ENCODE measurements at regions of chr10 and their contacts with region 1.

Region 1: GRCh38 chr10:6929148-6929830 is 349.2 kb upstream of the PRKCQ start:
- DNase-seq: no peak
- H3K4me3 Mint-ChIP-seq: peak overlapping the region; percentile 19
- H3K27ac Mint-ChIP-seq: no peak overlapping the region
- H3K4me1 Mint-ChIP-seq: peaks cover 54% of the 10 kb centered on the region
- H3K27me3 Mint-ChIP-seq: peaks cover 6% of the 10 kb centered on the region

Region 2: GRCh38 chr10:6748978-6749635 is 180.2 kb before region 1 on chr10:
- intact Hi-C with region 1: no loop called
- DNase-seq: no peak
- H3K4me3 Mint-ChIP-seq: no peak overlapping the region
- H3K27ac Mint-ChIP-seq: no peak overlapping the region
- H3K4me1 Mint-ChIP-seq: peaks cover 4% of the 10 kb centered on the region
- H3K27me3 Mint-ChIP-seq: peaks cover 19% of the 10 kb centered on the region

Region 3: DNA sequence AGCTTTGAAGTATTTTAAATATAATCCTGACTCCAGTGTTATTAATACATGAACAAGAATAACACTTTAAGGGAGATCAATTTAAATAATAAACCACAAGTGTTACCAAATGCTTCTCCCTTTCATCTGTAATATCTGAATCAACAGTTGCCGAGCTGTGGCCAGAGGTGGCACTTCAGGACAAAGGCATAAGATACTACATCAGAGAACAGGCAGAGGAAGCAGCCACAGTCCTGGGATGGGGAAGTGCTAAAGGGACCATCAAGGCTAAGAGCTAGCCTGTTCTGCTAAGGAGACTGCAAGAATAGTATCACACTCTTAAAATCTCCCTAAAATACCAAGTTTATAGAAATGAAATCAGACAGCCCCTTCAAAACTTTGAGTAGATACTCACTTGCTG is 29.0 kb after region 1 on chr10:
- intact Hi-C with region 1: loop called (anchors 2 kb)
- DNase-seq: no peak
- H3K4me3 Mint-ChIP-seq: no peak overlapping the region
- H3K27ac Mint-ChIP-seq: peak overlapping the region; percentile 31
- H3K4me1 Mint-ChIP-seq: peaks cover 21% of the 10 kb centered on the region
- H3K27me3 Mint-ChIP-seq: peaks cover 2% of the 10 kb centered on the region

Region 4: GRCh38 chr10:7003831-7004395 is 74.6 kb after region 1 on chr10:
- intact Hi-C with region 1: no loop called
- DNase-seq: no peak
- H3K4me3 Mint-ChIP-seq: no peak overlapping the region
- H3K27ac Mint-ChIP-seq: no peak overlapping the region
- H3K4me1 Mint-ChIP-seq: no peaks in the 10 kb centered on the region
- H3K27me3 Mint-ChIP-seq: peaks cover 10% of the 10 kb centered on the region

Region 5: DNA sequence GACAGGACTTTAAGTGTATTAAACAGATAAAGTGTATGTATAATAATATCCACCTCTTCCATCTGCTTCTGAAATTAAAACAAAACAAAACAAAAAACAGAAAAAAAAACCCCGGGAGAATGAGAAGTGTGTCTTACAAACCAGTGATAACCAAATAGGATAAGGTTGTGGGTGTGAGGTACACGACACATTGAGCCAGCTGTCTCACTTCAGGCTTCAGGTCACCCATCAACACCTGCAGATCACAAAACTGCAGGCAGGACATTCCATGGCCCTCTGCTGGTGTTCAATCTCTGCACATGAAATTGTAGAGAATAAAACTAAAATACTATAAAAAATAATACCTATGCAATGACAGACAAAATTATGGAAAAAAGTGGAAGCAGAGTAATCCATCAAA is 141.7 kb after region 1 on chr10:
- intact Hi-C with region 1: loop called (anchors 2 kb)
- DNase-seq: no peak
- H3K4me3 Mint-ChIP-seq: no peak overlapping the region
- H3K27ac Mint-ChIP-seq: no peak overlapping the region
- H3K4me1 Mint-ChIP-seq: no peaks in the 10 kb centered on the region
- H3K27me3 Mint-ChIP-seq: peaks cover 22% of the 10 kb centered on the region

Measured in activated T-helper 1 cell treated with anti-CD3 and anti-CD28 coated beads, Interleukin-12 subunit alpha, Interleukin-12 subunit beta, Interleukin-2, Interleukin-4 antibody, amounts not matched to agents 30 ng/mL and 10 ng/mL and 1 ng/mL, durations not matched to agents 14 hours and 24 hours and 36 hours (primary cell).